ENCODE measurements at regions of chr6 and their contacts with region 1.

Region 1: DNA sequence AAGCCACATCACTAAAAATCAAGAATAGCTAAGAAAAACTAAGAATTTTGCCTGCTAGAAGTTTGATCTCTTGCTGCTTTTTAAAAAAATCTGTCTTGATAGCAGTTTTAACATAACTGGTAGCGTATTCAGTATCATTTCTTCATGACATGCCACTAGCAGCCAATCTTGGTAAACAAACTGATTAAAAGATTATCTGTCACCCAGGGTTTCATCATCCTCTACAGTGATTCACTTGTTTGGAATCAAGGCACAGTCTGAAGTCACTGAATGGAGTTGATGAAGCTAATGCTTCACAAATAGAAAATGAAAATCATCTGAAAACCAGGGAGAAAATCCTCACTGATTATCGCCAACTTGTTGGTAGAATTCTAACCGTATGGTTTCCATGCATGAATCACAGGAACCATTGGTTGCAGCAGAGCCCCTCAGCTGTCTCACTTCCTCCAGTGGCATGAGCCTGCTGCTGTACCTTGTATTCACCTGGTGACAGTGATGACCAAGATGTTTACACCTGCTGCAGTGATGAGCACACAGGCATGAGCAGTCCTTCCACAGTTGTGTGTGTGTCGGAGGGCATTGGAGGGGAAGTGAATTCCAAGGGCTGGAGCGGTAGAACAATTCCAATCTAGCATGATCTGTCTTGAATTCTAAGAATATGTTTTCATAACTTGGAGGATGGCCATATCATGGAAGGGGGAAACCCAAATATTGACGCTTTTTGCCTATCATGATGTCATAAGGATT is 275.0 kb downstream of the KHDC1L start:
- DNase-seq: no peak
- ATAC-seq: no peak
- H3K4me3 ChIP-seq: no peak overlapping the region
- H3K27ac ChIP-seq: no peak overlapping the region
- H3K4me1 ChIP-seq: no peaks in the 10 kb centered on the region
- H3K27me3 ChIP-seq: no peaks in the 10 kb centered on the region
- CTCF ChIP-seq: no peak

Region 2: GRCh38 chr6:74404366-74404765 is 1454.1 kb after region 1 on chr6:
- intact Hi-C with region 1: loop called in 1 of 10 experiments (anchors 10 kb)
- DNase-seq: no peak
- ATAC-seq: no peak
- H3K4me3 ChIP-seq: no peak overlapping the region
- H3K27ac ChIP-seq: no peak overlapping the region
- H3K4me1 ChIP-seq: no peaks in the 10 kb centered on the region
- H3K27me3 ChIP-seq: no peaks in the 10 kb centered on the region
- CTCF ChIP-seq: no peak

Measured in heart right ventricle (tissue), 16 donors.